Psoas muscle (tissue), 8 donors: ENCODE measurements at regions of chr4 and their contacts with region 1.

Region 1: GRCh38 chr4:127782274-127783025 is at the start of gene HSPA4L:
- DNase-seq: peak; percentile 67 to 91
- ATAC-seq: peak; percentile 64 to 98 (median 85)
- H3K4me3 ChIP-seq: peak within 1 kb of the TSS; percentile 85
- H3K27ac ChIP-seq: peak within 1 kb of the TSS; percentile 72
- H3K4me1 ChIP-seq: no peaks in the 10 kb centered on the region
- H3K27me3 ChIP-seq: no peaks in the 10 kb centered on the region
- CTCF ChIP-seq: peak; percentile 21
- total RNA-seq, gene HSPA4L: 1.6 to 8.2 (median 5.0) TPM

Region 2: DNA sequence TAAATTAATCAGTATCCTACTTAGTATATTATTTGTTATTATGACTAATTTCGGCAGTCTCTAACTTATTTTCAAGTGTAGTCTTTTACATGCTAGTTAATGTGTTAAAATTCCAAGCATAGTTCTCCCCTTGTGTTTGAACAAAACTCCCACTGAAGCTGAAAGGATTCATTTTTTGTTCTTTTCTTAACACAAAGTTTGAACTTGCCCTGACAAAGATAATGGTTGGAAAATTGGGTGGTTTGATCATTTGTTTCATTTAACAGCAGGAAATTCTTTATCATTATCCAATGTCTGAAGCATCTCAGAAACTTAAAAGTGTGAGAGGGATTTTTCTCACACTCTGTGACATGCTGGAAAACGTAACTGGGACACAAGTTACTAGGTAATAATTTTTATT is 113.7 kb before region 1 on chr4:
- intact Hi-C with region 1: no loop called
- DNase-seq: no peak
- ATAC-seq: no peak
- H3K4me3 ChIP-seq: no peak overlapping the region
- H3K27ac ChIP-seq: no peak overlapping the region
- H3K4me1 ChIP-seq: no peaks in the 10 kb centered on the region
- H3K27me3 ChIP-seq: no peaks in the 10 kb centered on the region
- CTCF ChIP-seq: no peak

Region 3: GRCh38 chr4:127870688-127871087 is 88.2 kb after region 1 on chr4:
- intact Hi-C with region 1: loop called in 1 of 2 experiments (anchors 10 kb)
- DNase-seq: no peak
- ATAC-seq: no peak
- H3K4me3 ChIP-seq: no peak overlapping the region
- H3K27ac ChIP-seq: peak overlapping the region; percentile 25
- H3K4me1 ChIP-seq: no peaks in the 10 kb centered on the region
- H3K27me3 ChIP-seq: no peaks in the 10 kb centered on the region
- CTCF ChIP-seq: no peak

Region 4: GRCh38 chr4:128060699-128061565 is 278.5 kb after region 1 on chr4 and contains the start of gene LARP1B:
- intact Hi-C with region 1: loop called in 1 of 2 experiments (anchors 5 kb)
- DNase-seq: peak; percentile 96 to 98
- ATAC-seq: peak; percentile 95 to 97 (median 96)
- H3K4me3 ChIP-seq: peak within 1 kb of the TSS; percentile 84
- H3K27ac ChIP-seq: peak within 1 kb of the TSS; percentile 97
- H3K4me1 ChIP-seq: peaks cover 21% of the 10 kb centered on the region
- H3K27me3 ChIP-seq: no peaks in the 10 kb centered on the region
- CTCF ChIP-seq: no peak
- total RNA-seq, gene LARP1B: 13.3 to 23.6 (median 20.1) TPM